Activated naive CD4-positive, alpha-beta T cell treated with anti-CD3 and anti-CD28 coated beads, Interleukin-2, amount 10 ng/mL, durations not matched to agents 7 days and 5 days (primary cell): ENCODE measurements at regions of chr3 and their contacts with region 1.

Region 1: DNA sequence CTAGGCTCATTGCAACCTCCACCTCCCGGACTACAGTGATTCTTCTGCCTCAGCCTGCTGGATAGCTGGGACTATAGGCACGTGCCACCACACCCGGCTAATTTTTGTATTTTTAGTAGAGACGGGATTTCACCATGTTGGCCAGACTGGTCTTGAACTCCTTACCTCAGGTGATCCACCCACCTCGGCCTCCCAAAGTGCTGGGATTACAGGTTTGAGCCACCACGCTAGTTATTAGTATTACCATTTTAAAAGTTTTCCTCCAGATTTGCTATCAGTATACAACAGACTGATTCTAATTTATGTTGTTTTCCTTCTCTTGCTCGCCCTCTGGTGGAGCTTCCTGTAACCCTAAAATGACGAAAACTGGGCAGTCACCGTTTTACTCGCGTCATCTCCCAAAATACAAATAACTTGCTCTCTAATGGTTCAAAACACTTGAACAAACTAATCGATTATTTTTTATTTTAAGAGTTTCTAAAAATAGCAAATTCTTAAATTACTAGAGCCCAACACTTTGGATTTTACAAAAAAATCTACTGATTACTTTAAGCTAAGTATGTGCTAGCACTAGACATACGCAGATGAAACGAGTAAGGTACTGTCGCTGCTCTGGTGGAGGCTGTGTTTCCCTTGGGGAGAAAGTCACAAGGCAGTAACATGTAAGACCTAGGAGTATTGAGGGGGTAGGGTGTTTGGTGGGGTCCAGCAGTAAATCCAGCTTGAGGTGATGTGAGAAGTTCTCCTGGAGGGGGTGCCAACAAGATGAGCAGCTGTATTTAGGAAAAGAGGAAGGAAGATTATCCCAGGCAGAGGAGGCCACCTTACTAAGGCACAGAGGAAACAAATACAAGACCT is 203.3 kb downstream of the MBNL1 start:
- DNase-seq: peak; percentile 79
- H3K4me3 Mint-ChIP-seq: no peak overlapping the region
- H3K27ac Mint-ChIP-seq: peak overlapping the region; percentile 33
- H3K4me1 Mint-ChIP-seq: peaks cover 7% of the 10 kb centered on the region
- H3K27me3 Mint-ChIP-seq: no peaks in the 10 kb centered on the region

Region 2: DNA sequence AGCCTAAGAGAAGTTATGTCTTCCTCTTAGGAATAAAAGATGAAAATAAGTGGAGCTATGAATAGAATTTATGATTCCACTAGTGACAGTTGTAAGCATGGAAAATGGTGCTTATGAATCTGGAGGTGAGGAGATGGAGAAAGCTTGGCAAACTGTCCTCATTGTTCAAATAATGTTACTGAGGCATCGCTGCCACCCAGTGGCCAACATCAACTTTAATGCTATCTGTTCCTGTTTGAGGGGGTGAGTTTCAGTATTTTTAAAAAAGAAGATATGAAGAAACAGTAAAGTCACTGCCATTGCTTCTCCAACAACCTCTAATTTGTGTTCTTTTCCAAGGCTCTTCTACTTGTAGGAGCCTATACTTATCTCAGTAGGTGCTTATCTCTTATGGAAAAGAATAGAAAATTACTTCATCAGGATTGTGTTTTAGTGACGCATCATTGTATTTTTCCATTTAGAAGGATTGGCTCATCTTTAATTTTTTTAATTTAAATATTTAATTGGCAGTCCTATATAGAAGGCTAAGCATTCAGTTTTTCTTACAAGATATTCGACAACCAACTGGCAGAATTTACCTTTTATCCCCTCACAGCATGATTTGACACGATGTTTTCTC is 102.5 kb after region 1 on chr3:
- CTCF ChIA-PET with region 1: interaction called, 14 read pairs
- DNase-seq: peak; percentile 58
- H3K4me3 Mint-ChIP-seq: no peak overlapping the region
- H3K27ac Mint-ChIP-seq: no peak overlapping the region
- H3K4me1 Mint-ChIP-seq: no peaks in the 10 kb centered on the region
- H3K27me3 Mint-ChIP-seq: peaks cover 11% of the 10 kb centered on the region